A673 (cell line): ENCODE measurements at regions of chr4 and their contacts with region 1.

Region 1: GRCh38 chr4:86921608-86922252 is 13.1 kb upstream of the AFF1 start:
- DNase-seq: no peak
- H3K4me3 ChIP-seq: no peak overlapping the region
- H3K27ac ChIP-seq: no peak overlapping the region
- H3K4me1 ChIP-seq: peaks cover 13% of the 10 kb centered on the region
- H3K27me3 ChIP-seq: no peaks in the 10 kb centered on the region
- CTCF ChIP-seq: no peak

Region 2: DNA sequence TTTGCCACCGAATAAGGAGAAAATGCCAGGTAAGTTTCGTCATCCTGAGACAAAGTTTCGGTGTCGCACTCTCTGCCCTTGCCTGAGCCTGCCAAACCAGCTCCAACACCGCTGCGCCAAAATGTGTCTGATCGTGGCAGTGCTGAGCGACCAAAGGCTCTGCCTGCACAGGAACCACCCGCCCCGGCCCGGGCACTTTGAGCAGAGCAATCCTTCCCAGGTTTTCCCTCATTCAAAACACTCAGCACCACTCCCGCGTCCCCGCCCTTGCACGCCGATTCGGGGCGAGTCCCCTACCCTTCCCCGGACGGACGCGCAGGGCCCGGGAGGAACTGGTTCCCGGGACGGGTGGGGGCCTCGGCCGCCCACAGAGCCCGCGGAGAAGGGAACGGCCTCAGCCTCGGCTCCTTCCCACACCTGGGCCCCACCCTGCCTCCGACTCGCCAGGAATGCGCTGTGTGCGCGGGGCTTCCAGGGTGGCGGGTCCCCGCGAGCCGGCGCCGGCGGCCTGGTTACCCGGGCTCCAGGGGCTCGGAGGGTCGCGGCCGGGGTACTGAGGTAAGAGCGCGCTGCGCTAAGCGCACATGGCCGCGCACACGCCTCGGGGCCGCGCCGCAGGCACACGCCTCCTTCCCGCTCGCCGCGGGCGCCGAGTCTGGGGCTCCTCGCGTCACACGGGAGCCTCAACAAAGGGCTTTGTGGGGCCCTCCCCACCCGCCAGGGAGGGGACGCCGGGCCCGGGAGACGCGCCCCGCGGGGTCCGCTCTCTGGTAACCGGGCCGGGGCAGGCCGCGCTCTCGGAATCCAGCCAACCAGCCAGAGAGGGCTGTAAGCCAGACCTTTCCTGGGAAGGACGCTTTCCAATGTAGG is 29.7 kb before region 1 on chr4 and contains the start of gene C4orf36:
- CTCF ChIA-PET with region 1: no interaction called
- POLR2A ChIA-PET with region 1: no interaction called
- intact Hi-C with region 1: no loop called
- DNase-seq: peak; percentile 80
- H3K4me3 ChIP-seq: peak within 1 kb of the TSS; percentile 60
- H3K27ac ChIP-seq: peak within 1 kb of the TSS; percentile 89
- H3K4me1 ChIP-seq: peaks cover 17% of the 10 kb centered on the region
- H3K27me3 ChIP-seq: no peaks in the 10 kb centered on the region
- CTCF ChIP-seq: no peak
- total RNA-seq, gene C4orf36: 3.1 and 5.3 TPM in 2 replicates

Region 3: GRCh38 chr4:87093443-87094123 is 171.9 kb after region 1 on chr4:
- CTCF ChIA-PET with region 1: interaction called, 18 read pairs
- POLR2A ChIA-PET with region 1: no interaction called
- intact Hi-C with region 1: loop called (anchors 2 kb)
- DNase-seq: peak; percentile 68
- H3K4me3 ChIP-seq: no peak overlapping the region
- H3K27ac ChIP-seq: no peak overlapping the region
- H3K4me1 ChIP-seq: peaks cover 13% of the 10 kb centered on the region
- H3K27me3 ChIP-seq: no peaks in the 10 kb centered on the region
- CTCF ChIP-seq: peak; percentile 54